ENCODE measurements at regions of chr10 and their contacts with region 1.

Region 1: GRCh38 chr10:105691811-105692210 is 1050.7 kb downstream of the SORCS3 start:
- DNase-seq: no peak
- H3K4me3 ChIP-seq: no peak overlapping the region
- H3K27ac ChIP-seq: no peak overlapping the region
- H3K4me1 ChIP-seq: peaks cover 0 to 3% (median 0%) of the 10 kb centered on the region in 4 experiments; a peak in 1 of 7 replicates
- H3K27me3 ChIP-seq: no peaks in the 10 kb centered on the region
- CTCF ChIP-seq: peak in 2 of 3 experiments; percentile 59 to 71; a peak in 3 of 4 replicates
- EP300 ChIP-seq: no peak
- POLR2A ChIP-seq: no peak
- RAD21 ChIP-seq: peak; percentile 96 to 97

Region 2: DNA sequence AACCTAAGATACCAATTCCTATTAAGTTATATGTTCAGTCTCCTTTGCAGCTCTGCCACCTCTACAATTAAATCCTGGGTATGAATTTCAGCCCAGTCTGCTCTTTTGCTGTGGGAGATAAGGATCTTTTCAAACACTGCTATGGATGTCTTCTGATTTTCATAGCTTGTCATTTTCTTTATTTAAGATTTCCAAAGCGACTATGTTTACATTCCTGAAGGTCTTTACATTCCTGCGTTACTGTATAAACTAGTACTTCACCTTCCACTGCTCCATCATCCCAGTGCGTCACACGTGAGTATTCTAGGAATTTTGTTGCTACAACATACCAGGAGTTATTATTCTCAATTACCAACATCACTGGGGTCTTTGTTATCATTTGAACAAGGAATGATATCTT is 106.1 kb before region 1 on chr10:
- CTCF ChIA-PET with region 1: no interaction called
- POLR2A ChIA-PET with region 1: no interaction called
- DNase-seq: no peak
- H3K4me3 ChIP-seq: no peak overlapping the region
- H3K27ac ChIP-seq: no peak overlapping the region
- H3K4me1 ChIP-seq: peaks cover 0 to 4% (median 0%) of the 10 kb centered on the region in 4 experiments; a peak in 1 of 7 replicates
- H3K27me3 ChIP-seq: no peaks in the 10 kb centered on the region
- CTCF ChIP-seq: no peak
- EP300 ChIP-seq: no peak
- POLR2A ChIP-seq: no peak
- RAD21 ChIP-seq: no peak

Region 3: GRCh38 chr10:105634281-105634680 is 57.5 kb before region 1 on chr10:
- CTCF ChIA-PET with region 1: no interaction called
- POLR2A ChIA-PET with region 1: no interaction called
- DNase-seq: no peak
- H3K4me3 ChIP-seq: no peak overlapping the region
- H3K27ac ChIP-seq: no peak overlapping the region
- H3K4me1 ChIP-seq: no peaks in the 10 kb centered on the region; a peak in 1 of 7 replicates
- H3K27me3 ChIP-seq: no peaks in the 10 kb centered on the region
- CTCF ChIP-seq: no peak
- EP300 ChIP-seq: no peak
- POLR2A ChIP-seq: no peak
- RAD21 ChIP-seq: no peak

Region 4: GRCh38 chr10:105681051-105681450 is 10.8 kb before region 1 on chr10:
- CTCF ChIA-PET with region 1: interaction called, 14 read pairs
- POLR2A ChIA-PET with region 1: no interaction called
- DNase-seq: no peak
- H3K4me3 ChIP-seq: no peak overlapping the region
- H3K27ac ChIP-seq: no peak overlapping the region
- H3K4me1 ChIP-seq: peaks cover 0 to 8% (median 0%) of the 10 kb centered on the region in 4 experiments; a peak in 1 of 7 replicates
- H3K27me3 ChIP-seq: no peaks in the 10 kb centered on the region
- CTCF ChIP-seq: no peak
- EP300 ChIP-seq: no peak
- POLR2A ChIP-seq: no peak
- RAD21 ChIP-seq: no peak

Region 5: DNA sequence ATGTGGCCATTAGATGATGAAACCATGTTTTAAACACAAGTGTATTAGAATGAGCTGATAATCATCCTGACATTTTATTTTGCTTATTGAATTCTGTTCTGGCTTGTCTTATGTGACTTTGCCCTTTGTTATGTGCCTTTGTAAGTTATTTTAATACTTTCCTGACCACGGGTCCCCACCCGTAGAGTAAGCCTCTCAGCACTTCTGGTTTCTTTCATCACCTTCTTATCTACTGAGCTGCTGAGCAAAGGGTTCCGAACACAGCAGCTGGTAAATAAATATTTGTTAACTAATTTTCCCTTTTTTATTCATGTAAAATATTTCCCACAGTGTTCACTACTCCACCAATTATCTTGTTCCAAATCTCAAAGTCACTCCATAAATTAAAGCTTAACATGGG is 64.6 kb after region 1 on chr10:
- CTCF ChIA-PET with region 1: no interaction called
- POLR2A ChIA-PET with region 1: no interaction called
- DNase-seq: no peak
- H3K4me3 ChIP-seq: no peak overlapping the region
- H3K27ac ChIP-seq: no peak overlapping the region
- H3K4me1 ChIP-seq: no peaks in the 10 kb centered on the region; a peak in 1 of 7 replicates
- H3K27me3 ChIP-seq: no peaks in the 10 kb centered on the region
- CTCF ChIP-seq: no peak
- EP300 ChIP-seq: no peak
- POLR2A ChIP-seq: no peak
- RAD21 ChIP-seq: no peak

Region 6: GRCh38 chr10:105800641-105801040 is 108.8 kb after region 1 on chr10:
- CTCF ChIA-PET with region 1: no interaction called
- POLR2A ChIA-PET with region 1: no interaction called
- DNase-seq: no peak
- H3K4me3 ChIP-seq: no peak overlapping the region
- H3K27ac ChIP-seq: no peak overlapping the region
- H3K4me1 ChIP-seq: no peaks in the 10 kb centered on the region
- H3K27me3 ChIP-seq: no peaks in the 10 kb centered on the region
- CTCF ChIP-seq: no peak
- EP300 ChIP-seq: no peak
- POLR2A ChIP-seq: no peak
- RAD21 ChIP-seq: no peak

Measured in H1 (cell line).